Activated T-helper 1 cell treated with anti-CD3 and anti-CD28 coated beads, Interleukin-12 subunit alpha, Interleukin-12 subunit beta, Interleukin-2, Interleukin-4 antibody, amounts not matched to agents 30 ng/mL and 10 ng/mL and 1 ng/mL, durations not matched to agents 14 hours and 24 hours and 36 hours (primary cell): ENCODE measurements at regions of chr17 and their contacts with region 1.

Region 1: GRCh38 chr17:41665566-41666236 is 23.0 kb upstream of the EIF1 start:
- DNase-seq: peak; percentile 88
- H3K4me3 Mint-ChIP-seq: peak overlapping the region; percentile 81
- H3K27ac Mint-ChIP-seq: peak overlapping the region; percentile 98
- H3K4me1 Mint-ChIP-seq: peaks cover 60% of the 10 kb centered on the region
- H3K27me3 Mint-ChIP-seq: peaks cover 8% of the 10 kb centered on the region

Region 2: GRCh38 chr17:40317880-40318829 is 1347.5 kb before region 1 on chr17:
- intact Hi-C with region 1: loop called (anchors 10 kb)
- DNase-seq: peak; percentile 87
- H3K4me3 Mint-ChIP-seq: peak overlapping the region; percentile 95
- H3K27ac Mint-ChIP-seq: peak overlapping the region; percentile 92
- H3K4me1 Mint-ChIP-seq: peaks cover 91% of the 10 kb centered on the region
- H3K27me3 Mint-ChIP-seq: peaks cover 3% of the 10 kb centered on the region

Region 3: DNA sequence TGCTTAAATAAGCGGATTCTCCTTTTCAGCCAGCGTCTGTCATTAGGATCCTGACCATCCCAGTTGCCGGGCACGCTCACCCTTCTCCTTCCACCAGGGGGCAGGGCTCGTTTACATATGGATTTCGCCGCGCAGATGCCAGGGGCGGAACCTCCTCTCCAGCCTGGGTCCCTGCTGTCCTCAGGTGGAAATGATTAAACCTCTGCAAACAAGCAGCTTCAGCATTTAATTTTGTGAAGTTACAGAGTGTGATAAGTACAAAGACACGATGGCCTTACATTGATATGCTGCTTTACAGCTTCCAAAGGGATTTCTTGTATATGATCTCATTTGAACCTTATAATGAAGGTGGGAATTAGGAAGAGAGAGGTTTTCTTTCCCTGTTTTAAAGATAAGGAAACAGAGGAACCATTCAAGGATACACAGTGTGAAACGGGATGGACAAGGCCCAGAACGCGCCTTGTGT is 862.1 kb before region 1 on chr17:
- intact Hi-C with region 1: loop called (anchors 2 kb)
- DNase-seq: peak; percentile 49
- H3K4me3 Mint-ChIP-seq: no peak overlapping the region
- H3K27ac Mint-ChIP-seq: no peak overlapping the region
- H3K4me1 Mint-ChIP-seq: no peaks in the 10 kb centered on the region
- H3K27me3 Mint-ChIP-seq: peaks cover 39% of the 10 kb centered on the region

Region 4: DNA sequence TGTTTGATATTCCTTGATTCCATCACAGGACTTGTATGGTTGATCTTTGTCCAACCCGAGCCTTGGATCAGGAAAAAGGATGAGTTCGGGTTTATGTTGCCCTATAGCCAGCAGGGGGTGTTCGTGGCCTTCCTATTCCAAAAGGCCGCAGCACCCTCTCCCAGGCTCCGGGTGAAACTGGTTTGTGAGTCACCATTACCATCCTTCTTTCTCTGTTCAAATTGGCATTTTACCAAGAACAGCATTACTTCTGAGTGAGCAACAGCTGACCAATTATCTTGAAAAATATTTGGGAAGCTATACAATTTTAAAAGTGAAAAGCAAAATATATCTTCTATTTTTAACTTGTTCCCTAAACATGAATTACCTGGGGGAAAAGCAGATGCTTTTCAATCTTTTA is 756.4 kb before region 1 on chr17:
- intact Hi-C with region 1: loop called (anchors 1 kb)
- DNase-seq: peak; percentile 29
- H3K4me3 Mint-ChIP-seq: no peak overlapping the region
- H3K27ac Mint-ChIP-seq: no peak overlapping the region
- H3K4me1 Mint-ChIP-seq: no peaks in the 10 kb centered on the region
- H3K27me3 Mint-ChIP-seq: peaks cover 26% of the 10 kb centered on the region

Region 5: GRCh38 chr17:41486809-41487720 is 178.6 kb before region 1 on chr17:
- intact Hi-C with region 1: loop called (anchors 5 kb)
- DNase-seq: no peak
- H3K4me3 Mint-ChIP-seq: no peak overlapping the region
- H3K27ac Mint-ChIP-seq: no peak overlapping the region
- H3K4me1 Mint-ChIP-seq: no peaks in the 10 kb centered on the region
- H3K27me3 Mint-ChIP-seq: peaks cover 10% of the 10 kb centered on the region

Region 6: GRCh38 chr17:41635121-41636097 is 30.3 kb before region 1 on chr17:
- intact Hi-C with region 1: no loop called
- DNase-seq: no peak
- H3K4me3 Mint-ChIP-seq: no peak overlapping the region
- H3K27ac Mint-ChIP-seq: no peak overlapping the region
- H3K4me1 Mint-ChIP-seq: no peaks in the 10 kb centered on the region
- H3K27me3 Mint-ChIP-seq: no peaks in the 10 kb centered on the region

Region 7: DNA sequence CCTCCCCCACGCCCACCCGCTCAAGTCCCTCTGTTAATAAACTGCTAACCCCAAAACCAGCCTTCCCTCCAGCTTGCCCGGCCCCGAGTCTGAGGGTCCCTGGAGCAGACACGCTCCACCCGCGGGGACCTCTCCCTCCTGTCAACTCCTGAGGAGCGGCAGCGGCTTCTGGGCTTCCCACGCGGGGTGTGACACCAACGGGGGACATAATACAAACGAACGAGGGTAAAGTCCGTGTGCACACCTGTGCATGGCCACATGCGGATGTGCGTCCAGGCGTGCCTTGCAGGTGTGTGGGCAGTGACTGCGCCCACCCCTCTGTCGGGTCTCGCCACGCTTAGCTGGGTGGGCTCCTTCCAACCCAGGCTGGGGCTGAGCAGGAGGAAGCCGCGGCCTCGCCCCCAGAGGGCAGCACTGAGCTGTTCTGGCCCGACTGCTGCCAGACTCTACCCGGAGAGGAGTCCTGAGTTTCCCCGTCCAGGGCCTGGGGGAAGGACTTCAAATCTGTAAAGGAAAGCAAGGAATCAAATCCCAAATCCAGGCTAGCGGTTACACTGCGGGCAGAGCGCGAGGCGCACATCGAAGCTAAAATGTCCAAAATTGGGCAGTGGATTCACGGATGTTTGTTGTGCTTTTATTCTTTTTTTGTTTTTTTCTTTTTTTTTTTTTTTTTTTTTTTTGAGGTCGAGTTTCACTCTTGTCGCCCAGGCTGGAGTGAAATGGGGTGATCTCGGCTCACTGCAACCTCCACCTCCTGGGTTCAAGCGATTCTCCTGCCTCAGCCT is 17.1 kb before region 1 on chr17:
- intact Hi-C with region 1: loop called (anchors 1 kb)
- DNase-seq: peak; percentile 76
- H3K4me3 Mint-ChIP-seq: peak overlapping the region; percentile 73
- H3K27ac Mint-ChIP-seq: peak overlapping the region; percentile 52
- H3K4me1 Mint-ChIP-seq: peaks cover 10% of the 10 kb centered on the region
- H3K27me3 Mint-ChIP-seq: peaks cover 2% of the 10 kb centered on the region